ENCODE measurements at regions of chr4 and their contacts with region 1.

Region 1: DNA sequence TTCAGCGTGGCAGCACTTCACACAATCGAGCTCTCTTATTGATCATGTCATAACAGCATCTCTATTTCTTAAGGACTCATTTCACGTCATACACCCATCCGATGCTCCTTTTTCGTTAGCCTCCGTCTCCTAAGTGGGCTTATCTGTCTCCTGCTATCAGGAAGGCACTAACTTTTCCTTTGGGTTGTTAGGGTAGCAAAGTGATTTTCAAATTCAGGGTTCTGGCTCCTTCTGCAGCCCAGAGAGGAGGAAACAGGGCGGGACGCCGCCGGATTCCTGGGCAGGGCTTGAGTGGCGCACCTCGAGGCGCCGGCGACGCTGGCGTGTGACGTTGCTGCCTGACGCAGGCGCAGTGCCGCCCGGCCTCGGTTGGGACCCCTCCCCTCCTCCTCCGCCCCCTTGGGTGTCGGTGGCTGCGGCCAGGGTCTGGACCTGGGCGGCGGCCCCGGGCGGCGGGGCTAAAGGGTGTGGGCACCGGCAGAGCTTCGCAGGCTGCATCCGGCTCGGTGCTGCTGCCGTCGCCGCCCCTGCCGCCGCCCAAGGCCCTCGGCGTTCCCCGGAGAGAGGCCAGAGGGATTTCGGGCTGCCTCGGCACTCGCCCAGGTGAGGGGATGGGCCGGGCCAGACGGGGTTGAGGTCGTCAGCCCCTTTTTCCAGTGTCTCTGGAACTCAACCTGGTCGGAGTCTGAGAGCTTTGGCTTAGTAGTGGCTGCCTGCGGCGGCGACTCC is at the start of gene BLTP1:
- DNase-seq: peak; percentile 89
- ATAC-seq: peak; percentile 96
- H3K4me3 Mint-ChIP-seq: peak within 1 kb of the TSS; percentile 94
- H3K27ac Mint-ChIP-seq: peak within 1 kb of the TSS; percentile 97
- H3K4me1 Mint-ChIP-seq: peaks cover 35% of the 10 kb centered on the region
- H3K27me3 Mint-ChIP-seq: no peaks in the 10 kb centered on the region
- total RNA-seq, gene BLTP1: 52.5 to 58.5 TPM

Region 2: DNA sequence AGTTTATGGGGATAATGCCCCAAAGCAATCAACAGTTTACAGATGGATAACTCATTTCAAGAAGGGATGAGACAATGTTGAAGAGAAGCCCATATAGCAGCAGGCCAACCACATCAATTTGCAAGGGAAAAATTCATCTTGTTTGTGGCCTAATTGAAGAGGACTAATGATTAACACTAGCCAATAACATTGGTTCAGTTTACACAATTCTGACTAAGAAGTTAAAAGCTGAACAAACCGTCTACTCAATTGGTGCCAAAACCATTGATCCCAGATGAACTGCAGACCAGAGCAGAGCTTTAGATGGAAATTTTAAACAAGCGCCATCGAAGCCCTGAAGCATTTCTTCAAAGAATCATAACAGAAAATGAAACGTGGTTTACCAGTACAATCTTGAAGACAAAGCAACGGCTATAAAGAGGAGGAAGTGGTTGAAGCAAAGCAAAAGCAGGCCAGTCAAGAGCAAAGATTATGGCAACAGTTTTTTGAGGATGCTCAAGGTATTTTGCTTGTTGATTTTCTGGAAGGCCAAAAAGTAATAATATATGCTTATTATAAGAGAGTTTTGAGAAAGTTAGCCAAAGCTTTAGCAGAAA is 20.5 kb before region 1 on chr4:
- POLR2A ChIA-PET with region 1: interaction called, 11 read pairs
- DNase-seq: no peak
- ATAC-seq: peak; percentile 94
- H3K4me3 Mint-ChIP-seq: peak overlapping the region; percentile 52
- H3K27ac Mint-ChIP-seq: peak overlapping the region; percentile 91
- H3K4me1 Mint-ChIP-seq: peaks cover 28% of the 10 kb centered on the region
- H3K27me3 Mint-ChIP-seq: no peaks in the 10 kb centered on the region

Measured in activated naive CD8-positive, alpha-beta T cell treated with anti-CD3 and anti-CD28 coated beads, Interleukin-2, amount 10 ng/mL, durations not matched to agents 7 days and 5 days (primary cell).